ENCODE measurements at regions of chr9 and their contacts with region 1.

Region 1: GRCh38 chr9:13942695-13943094 is 371.2 kb downstream of the NFIB start:
- DNase-seq: peak; percentile 98
- ATAC-seq: peak; percentile 91
- H3K4me3 ChIP-seq: no peak overlapping the region
- H3K27ac ChIP-seq: no peak overlapping the region
- H3K4me1 ChIP-seq: peaks cover 4% of the 10 kb centered on the region; the same call in 1 of the 2 replicates
- H3K27me3 ChIP-seq: no peaks in the 10 kb centered on the region
- CTCF ChIP-seq: no peak
- POLR2A ChIP-seq: no peak
- RAD21 ChIP-seq: no peak

Region 2: DNA sequence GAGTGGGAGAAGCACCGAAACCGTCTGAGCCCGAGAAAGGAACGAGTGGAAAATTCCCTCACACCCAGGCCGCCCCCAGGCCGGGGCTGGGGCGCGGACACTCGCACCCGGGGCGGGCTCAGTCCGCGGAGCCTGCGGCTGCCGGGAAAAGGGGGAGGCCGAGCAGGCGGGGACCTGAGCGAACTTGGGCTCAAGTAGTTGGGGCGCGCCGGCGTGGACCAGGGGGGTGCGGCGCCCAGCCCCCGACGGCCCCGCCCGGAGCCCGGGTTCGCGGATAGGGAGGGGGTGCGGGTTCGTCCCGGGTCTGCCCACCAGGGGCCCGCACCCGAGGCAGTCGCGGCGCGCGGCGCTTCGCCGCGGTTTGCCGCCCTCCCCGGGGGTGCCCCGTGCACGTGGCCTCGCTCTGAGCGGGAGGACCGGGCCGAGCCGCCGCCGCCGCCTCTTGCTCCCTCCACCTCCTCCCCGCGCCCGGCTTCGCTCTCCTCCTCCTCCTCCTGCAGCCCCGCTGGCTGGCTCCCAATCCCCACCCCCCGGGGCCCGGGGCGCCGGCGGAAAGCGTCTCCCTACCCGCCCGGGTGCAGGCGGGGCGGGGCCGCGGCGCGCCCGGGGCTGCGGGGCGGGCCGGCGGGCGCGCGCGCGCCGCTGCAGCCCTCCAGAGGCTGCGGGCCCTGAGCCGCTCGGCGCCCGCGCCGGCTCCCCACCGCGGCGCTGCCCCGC is 372.4 kb after region 1 on chr9:
- CTCF ChIA-PET with region 1: no interaction called
- POLR2A ChIA-PET with region 1: no interaction called
- dilution Hi-C with region 1: no loop called
- in situ Hi-C with region 1: no loop called
- intact Hi-C with region 1: loop called (anchors 10 kb)
- DNase-seq: peak; percentile 34
- ATAC-seq: peak; percentile 68
- H3K4me3 ChIP-seq: peak overlapping the region; percentile 32; the same call in 1 of the 2 replicates
- H3K27ac ChIP-seq: no peak overlapping the region
- H3K4me1 ChIP-seq: no peaks in the 10 kb centered on the region; the same call in 1 of the 2 replicates
- H3K27me3 ChIP-seq: peaks cover 60% of the 10 kb centered on the region
- CTCF ChIP-seq: no peak
- POLR2A ChIP-seq: no peak
- RAD21 ChIP-seq: no peak